IMR-90 (cell line): ENCODE measurements at regions of chr3 and their contacts with region 1.

Region 1: DNA sequence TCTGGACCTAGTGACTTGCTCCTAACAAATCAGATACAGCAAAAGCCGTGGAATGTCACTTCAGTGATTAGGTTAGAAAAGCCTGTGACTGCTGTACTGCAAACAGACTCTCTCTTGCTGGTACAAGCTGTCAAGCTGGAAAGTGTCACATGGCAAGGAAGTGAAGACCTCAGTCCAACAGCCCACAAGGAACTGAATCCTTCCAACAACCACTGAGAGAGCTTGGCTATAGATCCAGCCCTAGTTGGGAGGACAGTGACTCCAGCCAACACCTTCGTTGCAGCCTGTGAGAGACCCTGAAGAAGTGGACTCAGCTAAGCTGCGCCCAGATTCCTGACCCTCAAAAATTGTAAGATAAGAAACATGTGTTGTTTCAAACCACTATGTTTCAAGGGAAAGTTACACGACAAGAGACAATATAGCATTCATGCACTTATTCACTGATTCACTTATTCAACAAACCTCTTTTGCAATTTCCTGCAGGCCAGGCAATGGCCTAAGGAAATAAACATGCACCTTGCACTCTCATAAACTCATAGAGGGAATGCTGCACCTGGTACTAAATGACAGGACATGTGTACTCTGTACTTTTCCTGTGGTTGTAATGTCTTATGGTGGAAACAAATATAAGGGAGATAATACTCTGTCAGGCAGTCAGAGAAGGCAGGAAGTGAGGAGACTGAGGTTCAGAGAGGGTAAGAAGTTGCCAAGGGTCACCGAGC is 142.9 kb downstream of the CADPS start:
- DNase-seq: no peak
- ATAC-seq: no peak
- H3K4me3 ChIP-seq: no peak overlapping the region
- H3K27ac ChIP-seq: no peak overlapping the region
- H3K4me1 ChIP-seq: no peaks in the 10 kb centered on the region
- H3K27me3 ChIP-seq: no peaks in the 10 kb centered on the region
- CTCF ChIP-seq: no peak
- POLR2A ChIP-seq: no peak
- RAD21 ChIP-seq: no peak

Region 2: GRCh38 chr3:62653796-62654195 is 78.5 kb before region 1 on chr3:
- CTCF ChIA-PET with region 1: no interaction called
- POLR2A ChIA-PET with region 1: interaction called, 15 read pairs
- dilution Hi-C with region 1: no loop called
- in situ Hi-C with region 1: no loop called
- intact Hi-C with region 1: no loop called
- DNase-seq: no peak
- ATAC-seq: no peak
- H3K4me3 ChIP-seq: no peak overlapping the region
- H3K27ac ChIP-seq: no peak overlapping the region
- H3K4me1 ChIP-seq: no peaks in the 10 kb centered on the region
- H3K27me3 ChIP-seq: no peaks in the 10 kb centered on the region; the same call in 1 of the 2 replicates
- CTCF ChIP-seq: no peak
- POLR2A ChIP-seq: no peak
- RAD21 ChIP-seq: no peak